PC-3 (cell line): ENCODE measurements at regions of chr7 and their contacts with region 1.

Region 1: DNA sequence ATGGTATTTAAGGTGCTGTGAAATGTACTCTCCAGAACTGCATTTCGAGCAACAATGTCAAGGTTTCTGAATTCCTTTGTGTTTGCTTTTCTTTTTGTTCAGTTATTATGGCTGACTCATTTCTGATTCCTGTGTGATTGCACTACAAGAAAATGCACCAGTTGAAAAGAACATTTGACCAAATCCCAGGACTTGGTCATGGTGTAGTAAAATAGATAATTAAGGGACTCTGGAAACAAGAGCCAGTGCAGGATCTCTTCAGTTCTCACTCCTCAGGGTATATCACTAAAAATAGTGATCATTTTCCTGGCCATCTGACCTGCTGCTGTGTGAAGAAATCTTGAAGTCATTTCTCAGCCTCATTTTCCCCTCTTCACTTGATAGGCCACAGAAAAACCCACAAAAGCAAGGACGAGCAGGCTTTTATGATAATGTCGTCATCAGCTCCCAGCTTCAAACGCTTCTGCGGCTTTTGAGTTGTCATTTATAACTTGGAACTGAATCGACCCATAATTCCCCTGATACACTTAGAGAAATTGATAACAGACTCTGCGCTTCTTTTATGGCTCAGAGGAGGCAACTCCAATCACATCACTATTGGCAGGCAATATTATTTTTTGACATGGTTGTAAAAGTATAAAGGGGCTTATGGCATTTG is 274.7 kb downstream of the HDAC9 start:
- DNase-seq: peak; percentile 74
- ATAC-seq: peak; percentile 90
- H3K4me3 ChIP-seq: no peak overlapping the region
- H3K27ac ChIP-seq: peak overlapping the region; percentile 53
- H3K4me1 ChIP-seq: peaks cover 26% of the 10 kb centered on the region
- H3K27me3 ChIP-seq: no peaks in the 10 kb centered on the region
- CTCF ChIP-seq: no peak

Region 2: DNA sequence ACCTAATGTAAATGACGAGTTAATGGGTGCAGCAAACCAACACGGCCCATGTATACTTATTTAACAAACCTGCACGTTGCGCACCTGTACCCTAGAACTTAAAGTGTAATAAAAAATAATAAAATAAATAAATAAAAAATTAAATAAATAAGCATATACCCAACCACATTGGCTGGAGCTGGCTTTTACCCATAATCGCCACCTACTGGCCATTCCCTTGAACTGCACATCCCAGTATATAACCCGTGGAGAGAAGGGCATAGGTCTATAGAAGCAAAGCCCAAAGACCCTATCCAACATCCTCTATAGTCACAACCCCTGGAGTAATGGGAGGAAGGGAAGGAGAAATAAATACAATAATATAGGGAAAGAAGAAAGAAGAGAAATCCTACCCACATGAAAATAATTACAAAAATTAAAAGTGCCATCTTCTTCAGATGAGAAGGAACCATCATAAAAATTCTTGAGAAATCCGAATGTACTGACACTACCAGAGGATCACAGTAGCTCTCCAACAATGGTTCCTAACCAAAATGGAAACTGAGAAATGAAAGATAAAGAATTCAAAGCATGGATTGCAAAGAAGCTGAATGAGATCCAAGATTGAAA is 281.6 kb after region 1 on chr7:
- CTCF ChIA-PET with region 1: no interaction called
- POLR2A ChIA-PET with region 1: no interaction called
- intact Hi-C with region 1: loop called (anchors 10 kb)
- DNase-seq: peak; percentile 70
- ATAC-seq: peak; percentile 40; the same call in 1 of the 2 replicates
- H3K4me3 ChIP-seq: no peak overlapping the region
- H3K27ac ChIP-seq: no peak overlapping the region
- H3K4me1 ChIP-seq: no peaks in the 10 kb centered on the region
- H3K27me3 ChIP-seq: no peaks in the 10 kb centered on the region
- CTCF ChIP-seq: peak; percentile 65